HCT116 (cell line): ENCODE measurements at regions of chr16 and their contacts with region 1.

Region 1: DNA sequence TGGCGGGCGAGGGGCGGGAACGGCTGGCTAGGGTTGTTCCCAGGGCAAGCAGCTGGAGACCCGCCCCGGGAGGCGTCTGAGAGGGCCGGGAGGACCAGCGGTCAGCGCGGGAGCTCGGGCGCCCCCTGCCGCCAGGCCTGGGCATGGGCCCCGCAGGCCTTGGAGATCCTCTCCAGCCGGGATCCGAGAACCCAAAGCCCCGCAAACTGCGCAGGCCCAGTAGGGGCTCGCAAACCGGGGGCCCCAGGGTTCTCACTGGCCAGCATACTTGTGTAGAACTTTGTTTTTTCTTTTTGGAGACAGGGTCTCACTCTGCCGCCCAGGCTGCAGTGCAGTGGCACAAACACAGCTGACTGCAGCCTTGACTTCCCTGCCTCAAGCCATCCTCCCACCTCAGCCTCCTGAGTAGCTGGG is 20.8 kb upstream of the ZNF423 start:
- DNase-seq: no peak
- ATAC-seq: peak; percentile 99
- H3K4me3 ChIP-seq: no peak overlapping the region
- H3K27ac ChIP-seq: no peak overlapping the region
- H3K4me1 ChIP-seq: peaks cover 0 to 7% of the 10 kb centered on the region in 2 experiments; a peak in 1 of 4 replicates
- H3K27me3 ChIP-seq: no peaks in the 10 kb centered on the region
- CTCF ChIP-seq: peak; percentile 41 to 97 (median 72)
- POLR2A ChIP-seq: no peak
- RAD21 ChIP-seq: peak; percentile 39

Region 2: DNA sequence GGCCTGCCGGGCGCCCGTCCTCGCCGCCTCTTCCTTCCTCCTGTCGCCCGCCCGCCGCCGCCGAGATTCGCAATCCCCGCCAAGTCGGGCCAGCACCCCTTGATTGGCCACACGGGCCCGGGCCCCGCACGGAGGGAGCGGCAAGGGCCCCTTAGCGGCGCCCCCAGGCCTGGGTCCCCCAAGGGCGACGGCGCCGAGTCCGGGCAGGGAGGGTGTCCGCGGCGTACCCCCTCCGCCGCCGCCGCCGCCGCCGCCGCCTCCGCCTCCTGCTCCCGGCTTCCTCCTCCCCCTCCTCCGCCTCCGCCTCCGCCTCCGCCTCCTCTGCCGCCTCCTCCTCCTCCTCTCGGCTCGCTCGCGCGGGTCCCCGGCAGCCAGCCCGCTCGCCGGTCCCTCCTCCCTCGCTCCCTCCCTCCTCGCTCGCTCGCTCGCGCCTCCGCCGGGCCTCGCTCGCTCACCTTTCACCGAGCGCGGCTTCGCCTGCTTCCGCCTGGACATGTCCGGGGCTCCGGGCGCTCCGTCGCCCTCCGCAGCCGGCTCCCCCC is 21.4 kb before region 1 on chr16:
- CTCF ChIA-PET with region 1: interaction called, 24 read pairs
- POLR2A ChIA-PET with region 1: interaction called, 3 read pairs
- RAD21 ChIA-PET with region 1: no interaction called
- intact Hi-C with region 1: no loop called
- DNase-seq: no peak
- ATAC-seq: peak; percentile 57
- H3K4me3 ChIP-seq: peak overlapping the region; percentile 37 to 58
- H3K27ac ChIP-seq: no peak overlapping the region; the same call in 1 of the 2 replicates
- H3K4me1 ChIP-seq: peaks cover 8 to 26% of the 10 kb centered on the region in 2 experiments; a peak in 3 of 4 replicates
- H3K27me3 ChIP-seq: peaks cover 42% of the 10 kb centered on the region
- CTCF ChIP-seq: no peak
- POLR2A ChIP-seq: no peak
- RAD21 ChIP-seq: no peak

Region 3: GRCh38 chr16:49890876-49891275 is 14.2 kb after region 1 on chr16:
- CTCF ChIA-PET with region 1: interaction called, 13 read pairs
- POLR2A ChIA-PET with region 1: no interaction called
- RAD21 ChIA-PET with region 1: no interaction called
- intact Hi-C with region 1: no loop called
- DNase-seq: no peak
- ATAC-seq: peak; percentile 77
- H3K4me3 ChIP-seq: no peak overlapping the region
- H3K27ac ChIP-seq: no peak overlapping the region
- H3K4me1 ChIP-seq: no peaks in the 10 kb centered on the region
- H3K27me3 ChIP-seq: no peaks in the 10 kb centered on the region
- CTCF ChIP-seq: peak in 2 of 3 experiments; percentile 36 to 41; a peak in 3 of 6 replicates
- POLR2A ChIP-seq: no peak
- RAD21 ChIP-seq: 0 out of 2 replicates have a peak, but pooled peaks have one; percentile 14

Region 4: DNA sequence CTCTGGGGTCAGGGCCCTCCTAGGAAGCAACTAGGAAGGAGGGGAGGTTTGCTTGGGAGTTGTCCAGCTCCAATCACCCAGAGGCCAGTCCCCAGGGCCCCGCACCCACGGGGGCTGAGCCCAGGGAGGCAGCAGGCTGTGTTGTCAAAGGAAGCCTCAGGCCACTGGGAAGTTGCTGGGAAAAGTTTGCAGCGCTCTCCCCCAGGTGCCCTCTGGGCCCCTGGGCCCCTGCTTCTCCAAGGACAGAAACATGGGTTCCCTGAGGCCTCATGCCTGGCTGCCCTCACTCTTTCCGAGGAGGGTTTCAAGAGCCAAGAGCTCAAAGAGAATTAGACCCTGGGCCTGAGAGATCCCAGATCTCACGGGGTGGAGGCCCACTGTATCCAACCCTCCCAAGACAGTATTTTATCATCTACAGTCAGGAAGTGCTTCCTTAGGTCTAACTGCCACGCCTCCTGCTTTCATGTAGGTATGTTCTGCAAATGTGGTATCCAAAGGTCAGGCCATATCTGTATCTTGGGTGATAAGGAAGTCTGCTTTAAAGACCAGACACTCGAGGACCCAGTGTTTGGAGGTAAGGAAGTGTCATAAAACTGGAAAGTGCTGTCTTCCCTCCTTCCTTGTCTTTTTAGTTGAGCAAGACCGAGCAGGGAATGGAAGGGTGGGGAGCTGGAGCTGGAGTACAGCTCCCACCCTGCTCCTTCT is 23.4 kb after region 1 on chr16:
- CTCF ChIA-PET with region 1: interaction called, 12 read pairs
- POLR2A ChIA-PET with region 1: no interaction called
- RAD21 ChIA-PET with region 1: no interaction called
- intact Hi-C with region 1: no loop called
- DNase-seq: no peak
- ATAC-seq: no peak
- H3K4me3 ChIP-seq: no peak overlapping the region
- H3K27ac ChIP-seq: no peak overlapping the region
- H3K4me1 ChIP-seq: no peaks in the 10 kb centered on the region
- H3K27me3 ChIP-seq: no peaks in the 10 kb centered on the region
- CTCF ChIP-seq: no peak
- POLR2A ChIP-seq: no peak
- RAD21 ChIP-seq: no peak